Activated T-helper 2 cell treated with anti-CD3 and anti-CD28 coated beads, Interferon-gamma antibody, Interleukin-2, Interleukin-4, amounts not matched to agents 10 μg/mL and 5 μg/mL and 100 μg/mL, durations not matched to agents 14 hours and 24 hours and 36 hours (primary cell): ENCODE measurements at regions of chr11 and their contacts with region 1.

Region 1: GRCh38 chr11:64916775-64917662 is at the start of gene ATG2A:
- DNase-seq: peak; percentile 98
- H3K4me3 Mint-ChIP-seq: peak within 1 kb of the TSS; percentile 89
- H3K27ac Mint-ChIP-seq: peak within 1 kb of the TSS; percentile 92
- H3K4me1 Mint-ChIP-seq: peaks cover 21% of the 10 kb centered on the region
- H3K27me3 Mint-ChIP-seq: no peaks in the 10 kb centered on the region
- total RNA-seq, gene ATG2A: 20.7 and 26.1 TPM in 2 replicates

Region 2: GRCh38 chr11:64778508-64779346 is 138.3 kb before region 1 on chr11 and contains the start of gene SF1:
- intact Hi-C with region 1: loop called (anchors 10 kb)
- DNase-seq: peak; percentile 100
- H3K4me3 Mint-ChIP-seq: peak within 1 kb of the TSS; percentile 89
- H3K27ac Mint-ChIP-seq: peak within 1 kb of the TSS; percentile 99
- H3K4me1 Mint-ChIP-seq: peaks cover 46% of the 10 kb centered on the region
- H3K27me3 Mint-ChIP-seq: no peaks in the 10 kb centered on the region
- total RNA-seq, gene SF1: 460 and 461 TPM in 2 replicates

Region 3: DNA sequence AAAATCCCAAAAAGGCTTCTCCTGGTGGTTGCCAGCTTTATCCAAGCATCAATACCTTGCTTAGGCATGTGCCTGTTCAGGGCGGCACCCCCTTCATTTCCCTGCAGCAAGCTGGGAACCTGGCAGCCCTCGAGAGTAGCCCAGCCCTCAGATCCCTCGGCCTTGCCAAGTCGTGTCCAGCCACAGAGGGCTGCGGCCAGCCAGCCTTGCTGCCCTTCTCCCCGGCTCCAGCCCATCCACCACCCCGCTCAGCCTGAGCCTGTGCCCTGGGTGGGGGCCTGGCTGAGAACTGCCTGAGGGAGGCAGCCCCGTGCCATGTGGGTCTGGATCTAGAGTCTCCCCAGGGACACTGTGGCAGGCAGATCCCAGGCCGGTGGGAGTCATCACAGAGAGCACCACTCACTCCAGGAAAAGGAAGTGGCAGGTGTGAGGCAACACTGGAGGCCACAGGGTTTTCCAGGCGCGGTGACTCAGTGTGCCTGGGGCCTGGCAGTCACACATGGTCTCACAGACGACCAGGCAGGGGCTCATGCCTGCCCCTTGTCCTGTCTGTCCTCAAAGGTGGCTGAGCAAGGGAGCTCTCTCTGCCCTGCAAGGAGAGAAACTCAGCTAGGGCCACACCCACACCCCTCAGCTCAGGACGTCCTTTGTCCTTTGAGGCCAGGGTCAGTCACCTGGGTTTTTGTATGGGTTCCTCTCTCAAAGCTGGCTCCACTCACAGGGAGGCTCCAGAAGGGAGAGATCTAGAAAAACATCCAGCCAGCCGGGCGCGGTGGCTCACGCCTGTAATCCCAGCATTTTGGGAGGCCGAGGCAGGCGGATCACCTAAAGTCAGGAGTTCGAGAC is 60.4 kb before region 1 on chr11:
- intact Hi-C with region 1: loop called (anchors 2 kb)
- DNase-seq: no peak
- H3K4me3 Mint-ChIP-seq: peak overlapping the region; percentile 18
- H3K27ac Mint-ChIP-seq: peak overlapping the region; percentile 77
- H3K4me1 Mint-ChIP-seq: peaks cover 73% of the 10 kb centered on the region
- H3K27me3 Mint-ChIP-seq: no peaks in the 10 kb centered on the region

Region 4: GRCh38 chr11:64900263-64900678 is 16.7 kb before region 1 on chr11:
- intact Hi-C with region 1: no loop called
- DNase-seq: peak; percentile 22
- H3K4me3 Mint-ChIP-seq: no peak overlapping the region
- H3K27ac Mint-ChIP-seq: peak overlapping the region; percentile 85
- H3K4me1 Mint-ChIP-seq: peaks cover 4% of the 10 kb centered on the region
- H3K27me3 Mint-ChIP-seq: no peaks in the 10 kb centered on the region

Region 5: GRCh38 chr11:64934682-64935358 is 17.8 kb after region 1 on chr11:
- intact Hi-C with region 1: no loop called
- DNase-seq: no peak
- H3K4me3 Mint-ChIP-seq: no peak overlapping the region
- H3K27ac Mint-ChIP-seq: no peak overlapping the region
- H3K4me1 Mint-ChIP-seq: no peaks in the 10 kb centered on the region
- H3K27me3 Mint-ChIP-seq: peaks cover 6% of the 10 kb centered on the region

Region 6: GRCh38 chr11:65027213-65028067 is 110.4 kb after region 1 on chr11 and contains the start of gene SNX15:
- intact Hi-C with region 1: loop called (anchors 1 kb)
- DNase-seq: peak; percentile 88
- H3K4me3 Mint-ChIP-seq: peak within 1 kb of the TSS; percentile 76
- H3K27ac Mint-ChIP-seq: peak within 1 kb of the TSS; percentile 87
- H3K4me1 Mint-ChIP-seq: peaks cover 15% of the 10 kb centered on the region
- H3K27me3 Mint-ChIP-seq: peaks cover 2% of the 10 kb centered on the region
- total RNA-seq, gene SNX15: 19.6 and 22.4 TPM in 2 replicates

Region 7: DNA sequence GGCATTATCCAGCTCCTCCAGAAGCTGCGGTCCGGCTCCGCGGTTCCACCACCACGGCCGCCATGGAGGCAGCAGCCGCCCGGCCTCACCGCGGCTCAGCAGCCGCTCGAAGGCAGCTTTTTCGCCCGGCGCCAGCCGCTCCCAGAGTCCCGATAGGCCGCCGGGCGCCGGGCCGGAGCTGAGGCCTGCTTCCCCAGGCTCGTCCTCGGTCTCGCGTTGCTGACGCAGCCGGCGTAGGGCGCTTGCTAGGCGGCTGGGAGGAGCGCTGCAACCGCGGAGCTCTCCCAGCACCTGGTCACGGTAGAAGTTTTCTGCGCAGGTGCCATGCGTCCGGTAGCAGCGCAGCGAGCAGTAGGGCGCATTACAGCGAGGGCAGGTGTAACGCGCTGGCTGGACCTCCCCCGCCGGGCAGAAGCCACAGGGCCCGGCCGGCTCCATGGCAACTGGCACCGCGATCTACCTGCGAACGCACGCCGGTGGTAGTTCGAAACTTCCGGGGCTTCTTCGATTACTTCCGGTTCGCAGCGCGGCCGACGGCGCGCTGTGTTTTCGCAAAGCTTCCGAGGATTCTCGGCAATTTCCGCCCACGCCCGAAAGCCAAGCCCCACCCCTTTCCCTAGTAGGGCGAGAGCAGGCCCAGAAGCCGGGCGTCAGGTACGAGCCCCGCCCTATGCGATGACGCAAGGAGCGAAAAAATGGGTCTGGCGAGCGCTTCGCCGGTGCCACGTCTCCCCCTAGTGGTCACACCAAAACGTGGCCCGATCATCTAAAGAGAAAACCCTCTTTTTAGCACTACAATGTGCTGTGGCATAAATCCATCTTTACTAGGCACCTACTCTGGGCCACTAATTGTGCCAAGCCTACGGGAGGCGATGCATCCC is 200.4 kb after region 1 on chr11 and contains the start of gene ZNHIT2:
- intact Hi-C with region 1: loop called (anchors 10 kb)
- DNase-seq: peak; percentile 100
- H3K4me3 Mint-ChIP-seq: peak within 1 kb of the TSS; percentile 84
- H3K27ac Mint-ChIP-seq: peak within 1 kb of the TSS; percentile 88
- H3K4me1 Mint-ChIP-seq: peaks cover 28% of the 10 kb centered on the region
- H3K27me3 Mint-ChIP-seq: no peaks in the 10 kb centered on the region
- total RNA-seq, gene ZNHIT2: 11.3 and 12.8 TPM in 2 replicates